Activated B cell treated with CpG ODN at 0.5 μM for 24 hours (primary cell): ENCODE measurements at regions of chr19 and their contacts with region 1.

Region 1: GRCh38 chr19:23686621-23687423 is at the start of gene ZNF675:
- DNase-seq: peak; percentile 75
- ATAC-seq: peak; percentile 97
- H3K4me3 Mint-ChIP-seq: peak within 1 kb of the TSS; percentile 99
- H3K27ac Mint-ChIP-seq: peak within 1 kb of the TSS; percentile 98
- H3K4me1 Mint-ChIP-seq: peaks cover 49% of the 10 kb centered on the region
- H3K27me3 Mint-ChIP-seq: no peaks in the 10 kb centered on the region
- CTCF ChIP-seq: no peak
- total RNA-seq, gene ZNF675: 27.9 and 34.2 TPM in 2 replicates

Region 2: DNA sequence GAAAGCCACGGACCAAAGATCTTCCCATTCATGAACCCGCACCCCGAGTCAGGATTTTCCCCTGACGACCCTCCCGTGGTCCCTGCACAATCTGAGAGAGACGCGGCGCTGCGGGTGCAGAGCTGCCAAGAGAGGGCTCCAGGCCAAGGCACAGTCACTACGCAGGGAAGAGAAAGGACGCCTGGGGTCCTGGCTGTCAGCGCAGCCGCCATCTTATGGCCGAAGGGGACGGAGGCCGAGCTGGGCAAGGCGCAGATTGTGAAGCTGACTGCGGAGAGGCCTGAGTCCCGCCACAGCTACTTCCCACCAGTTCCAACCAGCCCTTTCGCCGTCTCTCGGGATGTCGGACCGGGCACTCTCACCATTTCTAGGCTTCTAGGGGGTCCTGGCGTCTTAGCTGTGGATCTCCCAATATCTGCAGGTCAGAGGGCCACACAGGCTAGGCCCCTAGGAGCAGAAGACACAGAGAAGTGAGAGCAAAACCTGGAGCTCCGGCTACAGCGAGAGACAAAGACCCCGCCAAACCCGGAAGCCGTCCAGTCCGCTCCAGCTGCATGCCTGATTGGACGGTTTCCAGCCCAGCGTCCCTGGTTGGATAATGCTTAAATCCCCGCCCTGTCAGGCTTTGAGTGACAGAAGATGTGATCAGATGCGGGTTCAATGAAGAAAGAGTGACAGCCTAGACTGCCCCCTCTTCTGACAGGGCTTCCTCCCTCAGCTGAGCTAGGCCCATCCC is 1919.6 kb before region 1 on chr19 and contains the start of gene ZNF100:
- CTCF ChIA-PET with region 1: no interaction called
- POLR2A ChIA-PET with region 1: no interaction called
- intact Hi-C with region 1: loop called (anchors 10 kb)
- DNase-seq: peak; percentile 70
- ATAC-seq: peak; percentile 98
- H3K4me3 Mint-ChIP-seq: peak within 1 kb of the TSS; percentile 95
- H3K27ac Mint-ChIP-seq: peak within 1 kb of the TSS; percentile 88
- H3K4me1 Mint-ChIP-seq: peaks cover 18% of the 10 kb centered on the region
- H3K27me3 Mint-ChIP-seq: no peaks in the 10 kb centered on the region
- CTCF ChIP-seq: no peak
- total RNA-seq, gene ZNF100: 21.1 and 22.4 TPM in 2 replicates

Region 3: GRCh38 chr19:22634450-22634827 is 1052.4 kb before region 1 on chr19:
- CTCF ChIA-PET with region 1: no interaction called
- POLR2A ChIA-PET with region 1: interaction called, 3 read pairs
- intact Hi-C with region 1: loop called (anchors 10 kb)
- DNase-seq: no peak
- ATAC-seq: peak; percentile 12
- H3K4me3 Mint-ChIP-seq: peak overlapping the region; percentile 93
- H3K27ac Mint-ChIP-seq: peak overlapping the region; percentile 70
- H3K4me1 Mint-ChIP-seq: peaks cover 9% of the 10 kb centered on the region
- H3K27me3 Mint-ChIP-seq: no peaks in the 10 kb centered on the region
- CTCF ChIP-seq: no peak

Region 4: DNA sequence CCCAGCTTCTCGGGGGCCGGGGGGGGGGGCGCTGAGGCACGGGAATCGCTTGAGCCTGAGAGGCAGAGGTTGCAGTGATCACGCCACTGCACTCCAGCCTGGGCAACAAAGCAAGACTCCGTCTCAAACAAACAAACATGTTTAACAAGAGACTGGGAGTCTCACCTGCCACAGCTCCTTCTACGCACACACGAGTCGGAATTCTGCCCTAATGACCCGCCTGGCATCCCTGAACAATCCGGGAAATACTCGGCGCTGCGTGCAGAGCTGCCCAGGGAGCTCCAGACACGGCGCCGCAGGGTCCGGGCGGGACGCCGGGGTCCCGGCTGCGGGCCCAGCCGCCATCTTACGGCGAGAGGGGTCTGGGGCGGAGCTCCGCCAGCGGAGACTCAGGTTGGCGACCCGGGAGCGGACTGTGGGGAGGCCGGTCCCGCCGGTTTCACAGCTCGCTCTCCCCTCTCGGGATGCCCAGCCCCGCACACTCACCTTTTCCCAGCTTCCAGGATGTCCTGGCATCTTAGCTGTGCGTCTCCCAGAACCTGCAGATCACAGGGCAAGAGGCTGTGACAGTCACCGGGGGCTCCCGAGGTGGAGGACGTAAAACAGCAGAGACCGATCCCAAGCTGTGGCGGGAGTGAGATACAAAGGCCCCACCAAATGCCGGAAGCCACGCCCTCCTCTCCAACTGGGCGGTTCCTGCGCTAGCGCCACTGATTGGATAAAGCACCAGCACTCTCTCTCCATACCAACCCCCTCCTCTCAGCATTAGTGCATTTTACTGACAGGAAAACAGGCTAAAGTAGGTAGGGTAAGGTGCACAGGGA is 413.0 kb before region 1 on chr19:
- CTCF ChIA-PET with region 1: no interaction called
- POLR2A ChIA-PET with region 1: interaction called, 11 read pairs
- intact Hi-C with region 1: loop called (anchors 1 kb)
- DNase-seq: peak; percentile 89
- ATAC-seq: peak; percentile 98
- H3K4me3 Mint-ChIP-seq: peak overlapping the region; percentile 97
- H3K27ac Mint-ChIP-seq: peak overlapping the region; percentile 90
- H3K4me1 Mint-ChIP-seq: peaks cover 30% of the 10 kb centered on the region
- H3K27me3 Mint-ChIP-seq: no peaks in the 10 kb centered on the region
- CTCF ChIP-seq: no peak

Region 5: GRCh38 chr19:23758187-23759074 is 71.6 kb after region 1 on chr19 and contains the start of gene ZNF681:
- CTCF ChIA-PET with region 1: interaction called, 3 read pairs
- POLR2A ChIA-PET with region 1: interaction called, 25 read pairs
- intact Hi-C with region 1: loop called (anchors 1 kb)
- DNase-seq: peak; percentile 66
- ATAC-seq: peak; percentile 86
- H3K4me3 Mint-ChIP-seq: peak within 1 kb of the TSS; percentile 98
- H3K27ac Mint-ChIP-seq: peak within 1 kb of the TSS; percentile 93
- H3K4me1 Mint-ChIP-seq: peaks cover 19% of the 10 kb centered on the region
- H3K27me3 Mint-ChIP-seq: no peaks in the 10 kb centered on the region
- CTCF ChIP-seq: no peak
- total RNA-seq, gene ZNF681: 5.5 and 8.3 TPM in 2 replicates

Region 6: DNA sequence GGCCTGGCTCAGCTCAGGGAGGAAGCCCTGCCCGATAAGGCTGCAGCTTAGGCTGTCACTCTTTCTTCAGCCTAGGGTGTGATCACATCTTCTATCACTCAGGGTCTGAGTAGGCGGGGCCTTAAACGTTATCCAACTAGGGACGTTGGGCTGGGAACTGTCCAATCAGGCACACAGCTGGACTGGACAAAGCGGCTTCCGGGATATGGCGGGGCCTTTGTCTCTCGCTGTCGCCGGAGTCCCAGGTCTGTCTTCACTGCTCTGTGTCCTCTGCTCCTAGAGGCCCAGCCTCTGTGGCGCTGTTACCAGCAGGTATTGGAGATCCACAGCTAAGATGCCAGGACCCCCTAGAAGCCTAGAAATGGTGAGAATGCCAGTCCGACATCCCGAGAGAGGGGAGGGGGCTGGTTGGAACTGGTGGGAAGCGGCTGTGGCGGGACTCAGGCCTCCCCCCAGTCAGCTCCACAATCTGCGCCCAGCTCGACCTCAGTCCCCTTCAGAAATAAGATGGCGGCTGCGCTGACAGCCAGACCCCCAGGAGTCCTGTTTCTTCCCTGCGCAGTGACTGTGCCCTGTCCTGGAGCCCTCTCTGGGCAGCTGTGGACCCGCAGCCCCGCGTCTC is 400.3 kb after region 1 on chr19 and contains the start of gene ZNF254:
- CTCF ChIA-PET with region 1: no interaction called
- POLR2A ChIA-PET with region 1: interaction called, 3 read pairs
- intact Hi-C with region 1: loop called (anchors 5 kb)
- DNase-seq: peak; percentile 67
- ATAC-seq: peak; percentile 99
- H3K4me3 Mint-ChIP-seq: peak within 1 kb of the TSS; percentile 98
- H3K27ac Mint-ChIP-seq: peak within 1 kb of the TSS; percentile 97
- H3K4me1 Mint-ChIP-seq: peaks cover 10% of the 10 kb centered on the region
- H3K27me3 Mint-ChIP-seq: no peaks in the 10 kb centered on the region
- CTCF ChIP-seq: no peak
- total RNA-seq, gene ZNF254: 21.5 and 28.8 TPM in 2 replicates